ENCODE measurements at regions of chr10 and their contacts with region 1.

Region 1: DNA sequence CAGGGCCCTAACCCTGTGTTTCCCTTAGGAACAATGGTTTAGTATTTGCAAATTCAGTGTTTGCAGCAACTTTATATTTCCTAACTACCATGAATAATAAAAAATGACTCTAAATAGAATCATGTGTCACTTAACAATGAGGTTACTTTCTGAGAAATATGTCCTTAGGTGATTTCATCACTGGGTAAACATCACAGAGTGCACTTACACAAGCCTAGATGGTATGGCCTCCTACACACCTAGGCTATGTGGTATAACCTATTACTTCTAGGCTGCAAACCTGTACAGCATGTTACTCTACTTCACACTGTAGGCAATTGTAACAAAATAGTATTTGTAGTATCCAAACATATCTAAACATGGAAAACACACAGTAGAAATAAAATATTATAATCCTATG is 1174.6 kb upstream of the LRRTM3 start:
- DNase-seq: peak; percentile 94
- ATAC-seq: peak; percentile 85
- H3K4me3 ChIP-seq: no peak overlapping the region
- H3K27ac ChIP-seq: peak overlapping the region; percentile 66
- H3K4me1 ChIP-seq: peaks cover 32% of the 10 kb centered on the region
- H3K27me3 ChIP-seq: no peaks in the 10 kb centered on the region
- CTCF ChIP-seq: no peak

Region 2: DNA sequence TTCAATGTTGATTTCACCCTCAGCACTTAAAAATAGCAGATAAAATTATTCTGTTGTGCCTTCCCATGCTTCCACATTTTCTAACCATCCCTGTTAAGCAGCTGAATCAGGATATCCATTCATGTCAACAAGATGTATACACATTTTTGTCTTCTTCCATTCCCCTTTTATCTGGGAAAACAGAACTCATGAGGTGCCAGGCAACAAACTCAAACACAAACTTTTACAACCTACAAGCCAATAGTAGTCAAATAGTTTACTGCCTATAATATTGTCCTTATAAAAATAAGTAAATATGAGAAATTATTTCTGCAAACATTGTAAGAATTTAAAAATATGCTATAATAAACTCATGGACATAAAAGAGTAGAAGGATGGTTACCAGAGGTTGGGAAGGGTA is 660.2 kb before region 1 on chr10:
- CTCF ChIA-PET with region 1: no interaction called
- POLR2A ChIA-PET with region 1: no interaction called
- intact Hi-C with region 1: loop called (anchors 10 kb)
- DNase-seq: no peak
- ATAC-seq: peak; percentile 98
- H3K4me3 ChIP-seq: no peak overlapping the region
- H3K27ac ChIP-seq: no peak overlapping the region
- H3K4me1 ChIP-seq: no peaks in the 10 kb centered on the region
- H3K27me3 ChIP-seq: no peaks in the 10 kb centered on the region
- CTCF ChIP-seq: no peak

Region 3: DNA sequence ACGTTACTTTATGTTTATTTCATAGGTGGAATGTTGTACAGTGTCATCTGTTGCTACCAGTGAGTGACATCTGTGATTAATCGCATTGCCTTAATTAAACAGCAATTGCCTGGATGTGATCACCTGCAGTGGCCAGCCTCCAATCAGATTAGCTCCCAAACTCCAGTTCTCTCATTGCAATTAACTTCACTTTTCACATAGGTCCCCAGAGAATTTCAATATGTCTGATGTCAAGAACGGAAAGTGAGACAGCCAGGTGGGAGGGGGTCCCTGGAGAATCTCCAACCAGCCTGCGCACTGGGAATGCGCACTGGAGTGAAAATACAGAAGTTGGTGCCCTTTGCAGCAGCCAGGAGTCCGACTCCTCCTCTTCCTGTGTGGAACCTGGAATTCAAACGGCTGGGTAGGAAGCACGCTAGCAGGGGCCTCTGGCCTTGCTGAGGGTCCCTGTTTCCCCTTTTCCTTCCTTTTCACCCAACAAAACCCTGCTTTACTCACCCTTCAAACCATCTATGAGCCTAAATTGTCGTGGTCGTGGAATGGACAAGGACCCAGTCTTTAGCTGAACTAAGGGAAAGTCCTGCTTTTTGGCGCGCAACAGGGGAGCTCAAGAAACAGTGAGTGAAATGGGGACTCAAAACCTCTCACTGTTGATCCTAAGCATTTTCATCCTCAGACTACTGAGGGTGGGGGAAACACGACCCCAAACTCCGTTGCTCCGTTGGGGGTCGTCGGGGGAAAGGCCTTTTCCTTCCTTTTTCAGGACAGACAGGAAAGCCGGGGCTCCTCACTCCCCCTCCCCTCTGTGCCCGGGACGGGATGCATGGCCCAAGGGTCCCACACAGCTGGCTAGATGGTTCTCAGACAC is 180.8 kb before region 1 on chr10:
- CTCF ChIA-PET with region 1: no interaction called
- POLR2A ChIA-PET with region 1: no interaction called
- intact Hi-C with region 1: loop called (anchors 10 kb)
- DNase-seq: peak; percentile 89
- ATAC-seq: peak; percentile 93
- H3K4me3 ChIP-seq: peak overlapping the region; percentile 78
- H3K27ac ChIP-seq: peak overlapping the region; percentile 45
- H3K4me1 ChIP-seq: peaks cover 15% of the 10 kb centered on the region
- H3K27me3 ChIP-seq: no peaks in the 10 kb centered on the region
- CTCF ChIP-seq: no peak

Region 4: GRCh38 chr10:65710306-65710705 is 40.9 kb before region 1 on chr10:
- CTCF ChIA-PET with region 1: no interaction called
- POLR2A ChIA-PET with region 1: no interaction called
- intact Hi-C with region 1: loop called (anchors 5 kb)
- DNase-seq: no peak
- ATAC-seq: no peak
- H3K4me3 ChIP-seq: no peak overlapping the region
- H3K27ac ChIP-seq: no peak overlapping the region
- H3K4me1 ChIP-seq: no peaks in the 10 kb centered on the region
- H3K27me3 ChIP-seq: no peaks in the 10 kb centered on the region
- CTCF ChIP-seq: no peak

Region 5: DNA sequence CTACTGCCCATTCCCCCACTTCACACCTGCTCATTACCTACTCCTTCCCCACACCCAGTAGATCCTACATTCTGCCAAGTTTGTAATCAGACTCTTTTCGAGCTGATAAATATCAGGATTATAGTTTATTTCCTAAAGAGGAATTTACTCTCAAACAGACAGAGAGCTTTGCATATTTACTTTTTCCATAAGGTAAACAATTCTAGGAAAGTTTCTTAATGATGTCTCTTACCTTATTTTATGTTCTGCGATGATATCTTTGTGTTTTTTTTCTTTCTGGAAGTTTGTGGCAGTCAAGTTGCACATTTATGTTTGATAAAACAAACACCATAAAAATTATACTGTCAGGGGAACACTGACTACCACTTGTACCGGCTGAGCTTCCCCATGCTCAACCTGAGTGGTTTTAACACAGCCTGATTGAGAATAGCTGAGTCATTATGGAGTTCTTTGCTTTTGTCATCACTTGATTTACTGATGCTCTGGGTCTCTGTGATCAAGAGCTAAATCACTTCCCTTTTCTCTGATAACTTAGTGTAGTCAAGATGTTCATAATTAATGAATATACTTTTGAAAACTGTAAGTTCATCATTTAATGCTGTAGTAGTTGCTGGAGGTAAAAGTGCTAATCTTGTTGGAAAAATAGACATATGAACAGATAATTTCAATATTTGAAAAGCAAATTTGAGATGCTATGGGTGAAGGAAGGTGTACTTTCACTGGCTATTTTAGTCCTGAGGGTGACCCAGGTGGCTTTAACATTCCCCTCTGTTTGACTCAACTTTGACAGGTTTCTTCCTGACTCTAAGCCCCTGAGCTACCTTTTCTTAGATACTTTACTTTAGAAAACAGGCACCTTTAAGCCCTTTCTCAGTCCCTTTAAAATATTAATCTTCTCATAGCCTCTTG is 140.1 kb after region 1 on chr10:
- CTCF ChIA-PET with region 1: no interaction called
- POLR2A ChIA-PET with region 1: no interaction called
- intact Hi-C with region 1: loop called (anchors 1 kb)
- DNase-seq: peak; percentile 90
- ATAC-seq: peak; percentile 98
- H3K4me3 ChIP-seq: peak overlapping the region; percentile 6; the same call in 1 of the 2 replicates
- H3K27ac ChIP-seq: peak overlapping the region; percentile 74
- H3K4me1 ChIP-seq: peaks cover 21% of the 10 kb centered on the region
- H3K27me3 ChIP-seq: no peaks in the 10 kb centered on the region
- CTCF ChIP-seq: no peak

Region 6: DNA sequence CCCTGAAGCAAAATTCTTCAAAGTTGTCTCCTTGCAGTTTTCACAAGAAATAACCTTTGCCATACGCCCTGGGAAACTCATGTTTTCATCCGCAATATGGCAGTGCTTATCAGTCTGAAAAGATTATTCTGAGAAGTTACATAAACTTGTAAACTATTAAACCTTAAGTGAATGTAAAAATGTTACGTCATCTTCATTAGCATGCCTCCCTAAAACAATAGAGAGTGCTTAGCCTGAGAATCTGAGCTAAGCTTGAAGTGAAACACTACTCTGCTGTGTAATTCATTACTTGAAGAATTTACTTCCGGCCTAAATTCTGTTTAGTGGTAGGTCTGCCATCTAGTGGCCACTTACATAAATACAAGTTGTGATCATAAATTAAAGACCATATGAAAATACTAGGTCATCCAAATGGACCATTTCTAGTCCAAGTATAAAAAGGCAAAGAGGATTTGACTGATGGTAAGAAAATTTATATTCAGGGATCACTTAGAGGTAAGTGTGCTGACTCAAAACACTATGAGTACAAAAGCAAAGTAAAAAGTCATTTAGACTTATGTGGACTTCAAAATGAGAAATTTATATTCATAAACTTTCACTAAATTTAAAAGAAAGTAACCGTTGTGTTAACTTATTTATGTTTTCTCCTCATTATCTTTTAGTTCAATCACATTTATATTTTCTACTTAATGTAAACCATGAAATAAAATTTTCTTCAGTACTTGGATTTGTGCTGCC is 429.5 kb after region 1 on chr10:
- CTCF ChIA-PET with region 1: no interaction called
- POLR2A ChIA-PET with region 1: no interaction called
- intact Hi-C with region 1: loop called (anchors 5 kb)
- DNase-seq: peak; percentile 93
- ATAC-seq: peak; percentile 74
- H3K4me3 ChIP-seq: no peak overlapping the region
- H3K27ac ChIP-seq: no peak overlapping the region
- H3K4me1 ChIP-seq: no peaks in the 10 kb centered on the region
- H3K27me3 ChIP-seq: no peaks in the 10 kb centered on the region
- CTCF ChIP-seq: peak; percentile 95